ENCODE measurements at regions of chr7 and their contacts with region 1.

Region 1: GRCh38 chr7:123635551-123636359 is 19.9 kb upstream of the LMOD2 start:
- DNase-seq: peak; percentile 40 to 54 (median 47)
- ATAC-seq: peak; percentile 89
- H3K4me3 ChIP-seq: no peak overlapping the region
- H3K27ac ChIP-seq: no peak overlapping the region
- H3K4me1 ChIP-seq: no peaks in the 10 kb centered on the region
- H3K27me3 ChIP-seq: no peaks in the 10 kb centered on the region
- CTCF ChIP-seq: peak; percentile 63 to 93 (median 65); a peak in 5 of 6 replicates
- EP300 ChIP-seq: no peak
- POLR2A ChIP-seq: no peak
- RAD21 ChIP-seq: peak; percentile 97 to 98

Region 2: GRCh38 chr7:123580406-123581161 is 55.2 kb before region 1 on chr7:
- CTCF ChIA-PET with region 1: no interaction called
- POLR2A ChIA-PET with region 1: no interaction called
- in situ Hi-C with region 1: no loop called
- intact Hi-C with region 1: loop called (anchors 2 kb)
- DNase-seq: peak in 2 of 4 experiments; percentile 43 to 78
- ATAC-seq: peak; percentile 96
- H3K4me3 ChIP-seq: no peak overlapping the region
- H3K27ac ChIP-seq: no peak overlapping the region
- H3K4me1 ChIP-seq: 0 out of 5 replicates have a peak, but pooled peaks cover 0 to 2% of the 10 kb centered on the region in 2 experiments
- H3K27me3 ChIP-seq: no peaks in the 10 kb centered on the region
- CTCF ChIP-seq: peak; percentile 81 to 95 (median 83)
- EP300 ChIP-seq: no peak
- POLR2A ChIP-seq: no peak
- RAD21 ChIP-seq: peak; percentile 97 to 98

Region 3: GRCh38 chr7:123608991-123609882 is 26.5 kb before region 1 on chr7:
- CTCF ChIA-PET with region 1: no interaction called
- POLR2A ChIA-PET with region 1: no interaction called
- in situ Hi-C with region 1: no loop called
- intact Hi-C with region 1: no loop called
- DNase-seq: peak in 1 of 4 experiments; percentile 39
- ATAC-seq: peak; percentile 92
- H3K4me3 ChIP-seq: no peak overlapping the region
- H3K27ac ChIP-seq: peak overlapping the region; percentile 35; the same call in 2 of the 3 replicates
- H3K4me1 ChIP-seq: peaks cover 0 to 10% of the 10 kb centered on the region in 2 experiments; a peak in 3 of 5 replicates
- H3K27me3 ChIP-seq: no peaks in the 10 kb centered on the region
- CTCF ChIP-seq: no peak
- EP300 ChIP-seq: peak; percentile 93
- POLR2A ChIP-seq: no peak
- RAD21 ChIP-seq: no peak

Region 4: DNA sequence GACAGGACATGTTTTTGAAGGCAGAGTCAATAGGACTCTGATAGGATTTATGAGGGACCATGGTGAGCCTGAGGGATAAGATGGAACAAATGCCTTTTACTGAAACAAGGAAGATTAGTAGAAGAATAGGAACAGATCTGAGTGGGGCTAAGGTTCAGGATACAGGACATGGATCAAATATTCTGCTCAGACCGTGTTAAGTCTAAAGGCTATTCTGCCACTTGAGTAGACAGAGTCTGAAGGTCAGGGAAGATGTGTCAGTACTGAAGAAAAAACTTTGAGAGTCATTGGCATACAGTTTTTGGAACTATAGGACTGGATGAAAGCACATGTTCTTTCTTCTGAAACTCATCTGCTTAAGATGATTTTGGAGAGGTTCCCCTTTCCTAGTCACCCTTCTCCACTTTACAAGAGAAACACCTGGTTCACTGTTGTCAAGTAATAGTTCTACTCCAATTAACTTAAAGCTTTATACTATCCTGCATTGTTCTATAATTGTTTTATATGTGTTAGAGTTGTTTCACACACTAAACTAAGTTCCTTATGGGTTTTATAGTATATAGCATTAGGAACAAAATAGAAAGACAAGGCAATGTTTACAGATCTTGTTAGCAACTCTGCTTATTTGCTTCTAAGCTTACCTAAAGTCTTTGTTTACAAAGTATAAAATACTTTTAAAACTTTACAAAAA is 69.6 kb after region 1 on chr7:
- CTCF ChIA-PET with region 1: interaction called, 5 read pairs
- POLR2A ChIA-PET with region 1: no interaction called
- in situ Hi-C with region 1: no loop called
- intact Hi-C with region 1: loop called (anchors 1 kb)
- DNase-seq: no peak
- ATAC-seq: peak; percentile 17
- H3K4me3 ChIP-seq: no peak overlapping the region
- H3K27ac ChIP-seq: no peak overlapping the region
- H3K4me1 ChIP-seq: peaks cover 0 to 10% of the 10 kb centered on the region in 2 experiments; a peak in 3 of 5 replicates
- H3K27me3 ChIP-seq: no peaks in the 10 kb centered on the region
- CTCF ChIP-seq: no peak
- EP300 ChIP-seq: no peak
- POLR2A ChIP-seq: no peak
- RAD21 ChIP-seq: no peak

Region 5: DNA sequence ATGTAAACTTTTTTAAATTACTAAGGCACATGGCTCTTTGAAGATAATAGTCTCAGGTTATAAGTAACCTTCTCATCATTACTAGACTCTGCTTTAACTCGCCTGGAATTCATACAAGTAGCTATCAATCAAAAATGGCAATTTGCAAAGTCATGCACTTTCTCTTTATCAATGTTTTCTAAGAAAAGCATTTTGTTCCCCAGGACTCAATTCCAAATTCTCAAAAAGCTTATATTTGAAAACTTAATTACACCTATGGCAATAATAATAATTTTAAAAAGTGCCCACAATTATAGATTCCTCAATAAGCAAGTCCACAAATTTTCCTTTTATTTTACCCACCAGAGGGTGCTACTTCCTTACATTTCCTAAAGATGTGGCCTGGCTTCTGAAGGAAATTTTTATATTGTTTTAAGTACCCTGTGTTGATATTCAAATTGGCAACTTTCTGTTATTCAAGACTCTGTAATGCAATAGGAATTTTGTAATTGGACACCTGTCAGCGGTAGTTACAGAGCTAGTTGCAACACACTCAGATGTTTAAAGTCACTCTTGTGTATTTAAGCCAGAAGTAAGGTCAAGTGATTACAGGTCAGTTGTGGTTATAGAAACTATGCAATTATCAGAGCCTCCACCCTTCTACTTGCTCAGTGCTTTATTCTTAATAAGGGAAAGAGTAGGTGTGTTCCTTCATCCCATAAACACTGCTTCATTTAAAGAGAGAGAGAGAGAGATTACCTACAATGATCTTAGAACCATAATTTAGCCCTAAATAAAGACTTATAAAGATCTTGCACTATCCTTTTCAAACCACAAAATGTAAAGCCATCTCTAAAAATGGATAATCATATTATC is 162.1 kb after region 1 on chr7:
- CTCF ChIA-PET with region 1: no interaction called
- POLR2A ChIA-PET with region 1: no interaction called
- in situ Hi-C with region 1: no loop called
- intact Hi-C with region 1: loop called (anchors 2 kb)
- DNase-seq: peak in 3 of 4 experiments; percentile 27 to 59 (median 28)
- ATAC-seq: peak; percentile 78
- H3K4me3 ChIP-seq: no peak overlapping the region
- H3K27ac ChIP-seq: no peak overlapping the region
- H3K4me1 ChIP-seq: peaks cover 0 to 13% of the 10 kb centered on the region in 2 experiments; a peak in 1 of 5 replicates
- H3K27me3 ChIP-seq: no peaks in the 10 kb centered on the region
- CTCF ChIP-seq: peak; percentile 42 to 80 (median 45); a peak in 4 of 6 replicates
- EP300 ChIP-seq: no peak
- POLR2A ChIP-seq: no peak
- RAD21 ChIP-seq: peak; percentile 87 to 91

Region 6: GRCh38 chr7:123871998-123872867 is 236.5 kb after region 1 on chr7:
- CTCF ChIA-PET with region 1: interaction called, 6 read pairs
- POLR2A ChIA-PET with region 1: no interaction called
- in situ Hi-C with region 1: no loop called
- intact Hi-C with region 1: loop called (anchors 1 kb)
- DNase-seq: peak in 2 of 4 experiments; percentile 45 to 67
- ATAC-seq: peak; percentile 95
- H3K4me3 ChIP-seq: no peak overlapping the region
- H3K27ac ChIP-seq: no peak overlapping the region
- H3K4me1 ChIP-seq: no peaks in the 10 kb centered on the region
- H3K27me3 ChIP-seq: peaks cover 0 to 9% of the 10 kb centered on the region in 2 experiments; a peak in 1 of 5 replicates
- CTCF ChIP-seq: peak; percentile 62 to 82 (median 79)
- EP300 ChIP-seq: no peak
- POLR2A ChIP-seq: no peak
- RAD21 ChIP-seq: peak; percentile 89 to 94

Measured in K562 (cell line).